Calu3 (cell line): ENCODE measurements at regions of chr11 and their contacts with region 1.

Region 1: DNA sequence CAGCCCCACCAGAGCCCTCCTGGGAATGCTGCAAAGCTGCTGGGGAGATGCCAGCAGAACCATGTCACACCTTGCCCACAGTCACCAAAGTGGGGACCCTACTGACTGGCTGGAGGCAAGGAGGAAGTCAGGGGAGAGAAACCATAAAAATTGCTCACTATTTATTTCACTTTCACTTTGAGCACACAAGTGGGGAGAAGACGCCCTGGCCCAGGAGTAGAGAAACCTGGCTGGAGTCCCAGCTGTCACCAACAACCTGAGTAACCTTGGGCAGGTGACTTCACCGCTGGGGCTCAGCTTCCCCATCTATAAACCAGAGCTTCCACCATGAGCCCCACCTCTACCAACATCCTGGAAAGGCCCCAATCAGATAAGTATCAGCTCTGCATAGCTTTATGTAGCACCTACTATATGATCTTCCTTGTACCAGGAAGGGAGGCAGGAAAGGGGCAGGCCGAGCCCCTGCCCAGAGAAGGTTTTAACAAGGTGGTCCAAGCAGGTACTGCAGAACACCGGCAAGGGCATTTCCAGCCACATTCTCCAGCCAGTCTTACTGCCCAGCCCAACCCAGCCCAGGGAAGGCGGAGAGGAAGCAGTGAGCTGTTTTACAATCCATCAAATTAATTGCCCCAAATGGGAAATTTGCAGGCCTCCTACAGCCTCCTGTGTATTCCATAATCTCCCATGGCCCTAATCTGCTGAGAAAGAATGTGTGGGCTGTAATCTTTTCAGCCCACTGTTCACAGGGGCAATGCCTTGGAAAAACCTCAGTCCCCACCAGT is 27.6 kb downstream of the PLEKHA7 start:
- DNase-seq: peak; percentile 82
- H3K4me3 Mint-ChIP-seq: peak overlapping the region; percentile 49
- H3K27ac Mint-ChIP-seq: peak overlapping the region; percentile 80
- H3K4me1 Mint-ChIP-seq: peaks cover 81% of the 10 kb centered on the region
- H3K27me3 Mint-ChIP-seq: no peaks in the 10 kb centered on the region
- CTCF ChIP-seq: no peak

Region 2: DNA sequence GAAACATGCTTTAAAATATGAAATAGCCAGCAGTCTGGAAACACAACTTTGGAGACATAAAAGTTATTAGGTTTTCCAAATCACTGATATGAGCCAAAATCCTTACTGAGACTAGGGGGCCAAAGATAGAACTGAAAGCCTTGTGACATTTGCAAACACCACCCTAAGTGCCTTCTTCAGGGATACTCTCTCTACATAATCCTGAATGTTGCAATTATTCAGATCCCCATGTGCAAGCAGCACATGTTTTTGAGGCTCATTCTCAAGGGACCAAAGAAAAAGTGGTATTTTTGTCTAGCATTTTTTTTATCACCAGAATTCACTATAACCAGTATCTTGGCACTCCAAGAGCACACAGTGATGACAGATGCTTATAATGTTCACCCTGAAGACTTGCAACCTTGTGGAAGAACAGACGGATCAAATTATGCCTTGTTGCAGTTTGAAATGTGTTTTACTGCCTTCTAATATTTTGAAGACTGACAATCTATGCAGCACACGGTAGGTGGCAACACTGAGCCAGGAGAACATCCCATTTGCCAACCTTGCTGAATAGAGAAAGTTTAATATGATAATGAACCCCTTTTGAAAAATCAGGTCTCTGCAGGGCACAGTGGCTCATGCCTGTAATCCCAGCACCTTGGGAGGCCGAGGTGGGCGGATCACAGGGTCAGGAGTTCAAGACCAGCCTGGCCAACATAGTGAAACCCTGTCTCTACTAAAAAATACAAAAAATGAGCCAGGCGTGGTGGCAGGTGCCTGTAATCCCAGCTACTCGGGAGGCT is 50.9 kb before region 1 on chr11:
- CTCF ChIA-PET with region 1: no interaction called
- intact Hi-C with region 1: loop called (anchors 10 kb)
- DNase-seq: peak; percentile 45
- H3K4me3 Mint-ChIP-seq: no peak overlapping the region
- H3K27ac Mint-ChIP-seq: no peak overlapping the region
- H3K4me1 Mint-ChIP-seq: peaks cover 39% of the 10 kb centered on the region
- H3K27me3 Mint-ChIP-seq: no peaks in the 10 kb centered on the region
- CTCF ChIP-seq: peak; percentile 81

Region 3: GRCh38 chr11:16958833-16959232 is 27.8 kb before region 1 on chr11:
- CTCF ChIA-PET with region 1: interaction called, 4 read pairs
- intact Hi-C with region 1: loop called (anchors 2 kb)
- DNase-seq: no peak
- H3K4me3 Mint-ChIP-seq: peak overlapping the region; percentile 23
- H3K27ac Mint-ChIP-seq: peak overlapping the region; percentile 79
- H3K4me1 Mint-ChIP-seq: peaks cover 70% of the 10 kb centered on the region
- H3K27me3 Mint-ChIP-seq: no peaks in the 10 kb centered on the region
- CTCF ChIP-seq: no peak